IMR-90 (cell line): ENCODE measurements at regions of chr11 and their contacts with region 1.

Region 1: GRCh38 chr11:13608656-13609055 is 59.8 kb upstream of the FAR1 start:
- DNase-seq: no peak
- ATAC-seq: no peak
- H3K4me3 ChIP-seq: no peak overlapping the region
- H3K27ac ChIP-seq: no peak overlapping the region
- H3K4me1 ChIP-seq: no peaks in the 10 kb centered on the region
- H3K27me3 ChIP-seq: no peaks in the 10 kb centered on the region
- CTCF ChIP-seq: no peak
- POLR2A ChIP-seq: no peak
- RAD21 ChIP-seq: no peak

Region 2: DNA sequence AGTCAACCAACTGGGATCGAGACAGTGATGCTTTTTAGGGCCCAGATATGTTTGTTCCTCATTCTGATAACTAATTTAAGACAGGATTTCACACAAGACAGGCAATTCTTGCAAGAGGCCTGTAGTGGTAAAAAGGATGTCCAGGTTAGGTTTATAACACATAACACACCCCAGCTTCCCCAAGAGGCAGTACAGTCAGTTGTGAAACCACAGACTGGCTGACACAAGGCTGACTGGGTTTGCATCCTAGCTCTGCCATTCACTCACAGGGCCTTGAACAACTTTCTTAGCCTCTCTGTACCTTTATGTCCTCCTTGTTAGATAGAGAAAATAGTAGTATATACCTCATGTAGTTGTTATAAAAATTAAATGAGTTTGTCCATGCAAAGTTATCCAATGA is 57.9 kb before region 1 on chr11:
- CTCF ChIA-PET with region 1: no interaction called
- POLR2A ChIA-PET with region 1: no interaction called
- dilution Hi-C with region 1: no loop called
- in situ Hi-C with region 1: no loop called
- intact Hi-C with region 1: no loop called
- DNase-seq: no peak
- ATAC-seq: no peak
- H3K4me3 ChIP-seq: no peak overlapping the region
- H3K27ac ChIP-seq: no peak overlapping the region
- H3K4me1 ChIP-seq: no peaks in the 10 kb centered on the region
- H3K27me3 ChIP-seq: no peaks in the 10 kb centered on the region
- CTCF ChIP-seq: no peak
- POLR2A ChIP-seq: no peak
- RAD21 ChIP-seq: no peak

Region 3: GRCh38 chr11:13649619-13650018 is 41.0 kb after region 1 on chr11:
- CTCF ChIA-PET with region 1: no interaction called
- POLR2A ChIA-PET with region 1: no interaction called
- dilution Hi-C with region 1: no loop called
- in situ Hi-C with region 1: no loop called
- intact Hi-C with region 1: loop called (anchors 2 kb)
- DNase-seq: no peak
- ATAC-seq: no peak
- H3K4me3 ChIP-seq: no peak overlapping the region
- H3K27ac ChIP-seq: no peak overlapping the region
- H3K4me1 ChIP-seq: no peaks in the 10 kb centered on the region
- H3K27me3 ChIP-seq: no peaks in the 10 kb centered on the region; the same call in none of the 2 replicates
- CTCF ChIP-seq: no peak
- POLR2A ChIP-seq: no peak
- RAD21 ChIP-seq: no peak